A549 (cell line): ENCODE measurements at regions of chr5 and their contacts with region 1.

Region 1: GRCh38 chr5:178625679-178626483 is 969 bp downstream of the CLK4 start:
- DNase-seq: peak in 1 of 2 experiments; percentile 20
- ATAC-seq: peak; percentile 37 to 66
- H3K4me3 ChIP-seq: peak overlapping the region; percentile 82
- H3K27ac ChIP-seq: peak overlapping the region; percentile 95
- H3K4me1 ChIP-seq: peaks cover 14% of the 10 kb centered on the region
- CTCF ChIP-seq: no peak
- EP300 ChIP-seq: no peak
- POLR2A ChIP-seq: no peak
- RAD21 ChIP-seq: no peak

Region 2: GRCh38 chr5:178612299-178612698 is 13.6 kb before region 1 on chr5:
- CTCF ChIA-PET with region 1: no interaction called
- POLR2A ChIA-PET with region 1: no interaction called
- DNase-seq: no peak
- ATAC-seq: no peak
- H3K4me3 ChIP-seq: no peak overlapping the region
- H3K27ac ChIP-seq: no peak overlapping the region
- H3K4me1 ChIP-seq: no peaks in the 10 kb centered on the region
- CTCF ChIP-seq: no peak
- EP300 ChIP-seq: no peak
- POLR2A ChIP-seq: no peak
- RAD21 ChIP-seq: no peak

Region 3: GRCh38 chr5:178642351-178642971 is 16.6 kb after region 1 on chr5:
- CTCF ChIA-PET with region 1: no interaction called
- POLR2A ChIA-PET with region 1: no interaction called
- DNase-seq: no peak
- ATAC-seq: no peak
- H3K4me3 ChIP-seq: no peak overlapping the region
- H3K27ac ChIP-seq: no peak overlapping the region
- H3K4me1 ChIP-seq: no peaks in the 10 kb centered on the region
- CTCF ChIP-seq: no peak
- EP300 ChIP-seq: no peak
- POLR2A ChIP-seq: no peak
- RAD21 ChIP-seq: no peak

Region 4: DNA sequence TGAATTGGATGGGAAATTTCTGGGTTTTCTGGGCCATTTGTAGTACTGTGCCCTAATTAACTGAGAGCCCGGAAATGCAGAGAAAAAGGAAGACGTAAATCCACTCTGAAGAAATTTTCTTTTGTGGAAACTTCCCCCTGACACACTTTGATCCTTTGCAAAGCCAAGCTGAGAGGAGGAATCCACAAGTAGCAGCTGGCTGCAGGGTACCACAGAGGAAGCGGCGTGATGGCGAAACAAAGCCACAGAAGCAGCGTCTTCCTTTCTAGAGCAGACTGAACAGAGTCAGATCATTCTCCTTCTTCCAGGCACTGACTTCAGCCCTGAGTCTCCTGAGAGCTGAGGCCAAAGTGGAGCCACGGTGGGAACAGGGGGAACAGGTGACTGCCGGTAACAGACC is 151.7 kb after region 1 on chr5:
- CTCF ChIA-PET with region 1: no interaction called
- POLR2A ChIA-PET with region 1: interaction called, 10 read pairs
- DNase-seq: no peak
- ATAC-seq: no peak
- H3K4me3 ChIP-seq: no peak overlapping the region
- H3K27ac ChIP-seq: no peak overlapping the region
- H3K4me1 ChIP-seq: no peaks in the 10 kb centered on the region
- CTCF ChIP-seq: no peak
- EP300 ChIP-seq: no peak
- POLR2A ChIP-seq: no peak
- RAD21 ChIP-seq: no peak